ENCODE measurements at regions of chr2 and their contacts with region 1.

Region 1: DNA sequence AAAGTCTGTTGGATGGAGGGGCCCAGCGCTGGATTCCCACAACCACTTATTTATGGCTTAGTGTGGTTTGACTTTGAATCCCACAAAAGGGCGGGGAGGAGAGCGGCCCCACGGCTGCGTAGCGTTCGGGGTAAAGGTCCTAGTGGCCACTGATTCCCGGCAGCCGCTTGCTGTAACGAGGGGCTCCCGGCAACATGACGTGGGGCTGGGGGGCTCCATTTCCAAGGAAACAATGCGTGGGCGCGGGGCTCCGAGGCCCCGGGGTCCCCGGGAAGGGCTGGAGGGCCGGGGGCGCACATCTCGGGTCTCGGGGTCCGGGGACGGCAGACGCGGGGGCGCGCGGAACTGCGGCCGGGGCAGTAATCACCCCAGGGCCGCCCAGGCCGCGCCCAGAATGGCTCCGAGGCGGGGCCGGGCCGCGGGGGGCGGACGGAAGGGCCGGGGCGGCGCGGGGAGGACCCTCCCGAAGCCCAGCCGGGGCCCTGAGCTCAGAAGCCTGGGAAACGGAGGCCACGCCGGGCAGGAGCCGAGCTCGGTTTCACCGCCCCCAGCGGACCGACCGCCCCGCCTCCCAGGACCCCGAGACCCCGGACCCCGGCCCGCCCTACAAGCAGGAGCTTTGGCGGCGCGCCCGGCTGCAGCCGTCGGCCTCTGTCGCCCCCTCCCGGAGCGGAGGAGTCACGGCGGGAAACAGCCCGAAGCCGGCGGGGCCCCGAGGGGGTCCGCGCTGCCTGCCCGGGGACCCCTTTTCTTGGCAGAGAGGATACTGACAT is 11.9 kb upstream of the MLPH start:
- DNase-seq: no peak
- H3K4me3 ChIP-seq: peak overlapping the region; percentile 50
- H3K27me3 ChIP-seq: no peaks in the 10 kb centered on the region
- CTCF ChIP-seq: peak; percentile 78

Region 2: DNA sequence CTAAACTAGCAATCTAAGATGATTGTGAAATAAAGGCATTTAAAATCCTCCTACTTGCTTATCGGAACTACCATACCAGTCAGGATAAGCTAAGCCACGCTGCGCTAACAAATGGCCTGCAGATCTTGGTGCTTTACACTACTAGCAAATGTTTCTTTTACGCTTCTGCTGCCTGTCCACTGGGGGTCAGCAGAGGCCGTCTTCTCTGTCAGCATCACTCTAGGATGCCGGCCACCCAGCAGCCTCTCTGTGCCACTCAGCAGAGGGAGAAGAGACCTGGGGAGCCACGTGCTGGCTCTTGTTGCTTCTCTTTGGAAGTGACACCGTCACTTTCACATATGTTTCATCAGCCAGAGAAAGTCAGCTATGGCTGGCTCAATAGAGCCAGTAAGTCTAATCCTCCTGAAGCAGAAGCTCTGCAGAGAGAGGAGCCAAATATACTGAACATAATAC is 352.9 kb before region 1 on chr2:
- CTCF ChIA-PET with region 1: interaction called, 10 read pairs
- POLR2A ChIA-PET with region 1: no interaction called
- DNase-seq: no peak
- H3K4me3 ChIP-seq: no peak overlapping the region
- H3K27me3 ChIP-seq: no peaks in the 10 kb centered on the region
- CTCF ChIP-seq: peak; percentile 84

Region 3: DNA sequence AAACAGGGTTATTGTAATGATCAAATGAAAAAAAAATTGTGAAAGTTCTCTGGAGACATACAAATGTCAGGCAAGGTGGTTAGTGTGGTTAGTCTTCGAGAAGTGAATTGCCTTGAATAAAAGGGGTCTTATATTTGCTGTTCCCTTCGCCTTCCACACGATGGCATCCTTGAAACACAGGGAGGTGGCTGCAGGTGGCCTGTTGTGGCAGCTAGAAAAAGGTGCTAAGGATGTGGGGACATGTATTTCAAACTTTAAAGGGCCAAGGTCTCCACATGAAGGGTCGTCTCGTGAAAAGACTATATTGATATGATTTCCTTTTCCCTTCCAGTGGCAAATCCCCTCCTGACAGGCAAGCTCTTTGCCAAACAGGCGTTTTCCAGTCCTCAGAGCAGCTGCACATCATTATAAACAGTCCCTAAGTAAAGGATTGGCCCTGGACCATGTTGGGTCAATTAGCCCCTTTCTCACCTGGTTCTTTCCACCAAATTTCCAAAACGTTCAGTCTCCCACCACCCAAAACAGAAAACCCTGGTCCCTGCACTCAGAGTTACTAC is 321.0 kb before region 1 on chr2:
- CTCF ChIA-PET with region 1: interaction called, 11 read pairs
- POLR2A ChIA-PET with region 1: no interaction called
- DNase-seq: no peak
- H3K4me3 ChIP-seq: no peak overlapping the region
- H3K27me3 ChIP-seq: no peaks in the 10 kb centered on the region
- CTCF ChIP-seq: peak; percentile 79

Region 4: DNA sequence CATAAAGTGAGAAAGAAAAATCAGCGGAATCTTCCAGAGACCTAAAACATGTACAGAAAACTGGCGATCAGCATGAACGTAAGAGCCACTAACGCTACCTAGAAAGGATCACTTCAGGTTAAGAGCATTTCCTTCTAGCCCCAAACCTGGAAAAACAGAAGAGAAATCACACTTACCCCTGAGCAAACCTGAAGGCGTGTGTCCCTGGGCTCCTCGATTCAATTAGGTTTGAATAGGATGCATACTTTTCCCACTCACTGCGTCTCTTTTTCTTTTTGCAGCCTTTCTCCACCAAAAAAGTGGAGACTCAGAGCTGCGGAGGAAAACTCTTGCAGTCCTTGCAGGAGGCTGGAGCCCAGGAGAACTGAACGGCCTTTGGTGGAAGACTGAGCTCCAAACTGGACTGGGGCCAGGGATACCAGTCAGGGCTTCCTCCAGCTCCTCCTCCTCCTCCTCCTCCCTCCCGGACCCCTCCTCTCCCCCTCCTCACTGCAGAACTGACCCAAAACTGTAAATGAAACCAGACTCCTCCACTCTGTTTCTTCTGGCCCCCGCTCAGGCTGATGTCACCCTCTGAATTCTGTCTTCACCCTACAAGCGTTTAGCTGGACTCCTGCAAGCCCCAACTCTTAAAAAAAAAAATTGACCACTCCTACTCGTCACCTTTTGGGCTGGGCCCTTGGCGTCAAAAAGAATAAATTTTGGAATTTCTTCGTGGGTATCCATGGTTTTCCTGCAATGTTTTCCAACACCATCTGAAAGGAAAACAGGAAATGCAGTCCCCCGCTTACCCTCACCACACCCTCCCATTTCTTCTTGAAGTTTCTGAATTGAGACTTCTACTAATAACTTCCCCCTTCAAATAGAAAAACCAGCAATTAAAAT is 61.1 kb before region 1 on chr2 and contains the start of gene COL6A3:
- CTCF ChIA-PET with region 1: interaction called, 72 read pairs
- POLR2A ChIA-PET with region 1: no interaction called
- DNase-seq: peak; percentile 97
- H3K4me3 ChIP-seq: peak within 1 kb of the TSS; percentile 94
- H3K27me3 ChIP-seq: no peaks in the 10 kb centered on the region
- CTCF ChIP-seq: no peak
- polyA plus RNA-seq, gene COL6A3: 522 and 695 TPM in 2 replicates

Region 5: GRCh38 chr2:237421542-237422116 is 53.5 kb before region 1 on chr2:
- CTCF ChIA-PET with region 1: interaction called, 72 read pairs
- POLR2A ChIA-PET with region 1: interaction called, 4 read pairs
- DNase-seq: no peak
- H3K4me3 ChIP-seq: no peak overlapping the region
- H3K27me3 ChIP-seq: no peaks in the 10 kb centered on the region
- CTCF ChIP-seq: peak; percentile 95

Region 6: DNA sequence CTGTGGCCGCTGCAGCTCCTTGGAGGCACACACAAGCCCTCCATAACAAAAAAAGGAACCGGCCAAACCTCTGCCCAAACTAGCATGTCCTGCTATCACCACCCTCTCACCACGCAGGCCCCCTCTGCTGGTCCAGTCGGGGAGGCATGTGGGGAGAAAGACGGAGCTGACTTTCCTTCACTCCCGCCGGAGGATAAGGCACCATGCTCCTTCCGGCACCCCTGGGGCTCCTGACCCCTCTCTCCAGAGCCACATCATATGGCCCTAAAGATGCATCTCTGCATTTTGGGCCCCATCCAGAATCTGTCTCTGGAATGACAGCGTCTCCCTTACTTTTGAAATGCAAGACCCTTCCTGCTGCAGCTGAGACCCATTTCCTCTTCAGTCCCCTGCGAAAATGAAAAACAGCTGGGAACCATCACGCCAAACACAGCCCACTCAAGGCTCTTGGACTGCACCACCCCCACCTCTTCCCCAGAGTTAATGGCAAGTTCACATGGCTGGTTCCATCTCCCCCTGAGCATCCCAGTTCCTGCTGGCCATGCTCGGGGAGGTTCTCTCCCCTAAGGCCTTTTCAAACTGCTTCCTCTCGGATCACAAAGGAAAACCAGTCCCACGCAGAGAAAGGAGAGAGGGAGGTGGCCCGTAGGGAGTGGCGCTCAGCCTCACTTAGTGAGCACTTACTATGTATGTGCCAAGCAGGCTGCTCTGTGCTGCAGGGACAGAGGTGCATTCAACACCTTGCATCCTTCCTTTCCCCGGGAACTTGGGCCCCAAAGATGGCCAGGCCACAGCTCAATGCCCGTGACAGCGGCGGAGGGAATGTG is 23.3 kb before region 1 on chr2:
- CTCF ChIA-PET with region 1: interaction called, 25 read pairs
- POLR2A ChIA-PET with region 1: no interaction called
- DNase-seq: no peak
- H3K4me3 ChIP-seq: no peak overlapping the region
- H3K27me3 ChIP-seq: no peaks in the 10 kb centered on the region
- CTCF ChIP-seq: peak; percentile 73

Region 7: GRCh38 chr2:237459741-237460174 is 15.4 kb before region 1 on chr2:
- CTCF ChIA-PET with region 1: interaction called, 25 read pairs
- POLR2A ChIA-PET with region 1: no interaction called
- DNase-seq: peak; percentile 73
- H3K4me3 ChIP-seq: no peak overlapping the region
- H3K27me3 ChIP-seq: no peaks in the 10 kb centered on the region
- CTCF ChIP-seq: no peak